Caco-2 (cell line): ENCODE measurements at regions of chr5 and their contacts with region 1.

Region 1: GRCh38 chr5:127564002-127564769 is 46.7 kb downstream of the PRRC1 start:
- DNase-seq: peak; percentile 53 to 71
- H3K4me3 ChIP-seq: no peak overlapping the region
- H3K4me3 Mint-ChIP-seq: no peak overlapping the region
- H3K27ac Mint-ChIP-seq: no peak overlapping the region
- H3K4me1 ChIP-seq: no peaks in the 10 kb centered on the region
- H3K4me1 Mint-ChIP-seq: no peaks in the 10 kb centered on the region
- H3K27me3 ChIP-seq: no peaks in the 10 kb centered on the region
- H3K27me3 Mint-ChIP-seq: no peaks in the 10 kb centered on the region
- CTCF ChIP-seq: peak; percentile 60 to 80

Region 2: DNA sequence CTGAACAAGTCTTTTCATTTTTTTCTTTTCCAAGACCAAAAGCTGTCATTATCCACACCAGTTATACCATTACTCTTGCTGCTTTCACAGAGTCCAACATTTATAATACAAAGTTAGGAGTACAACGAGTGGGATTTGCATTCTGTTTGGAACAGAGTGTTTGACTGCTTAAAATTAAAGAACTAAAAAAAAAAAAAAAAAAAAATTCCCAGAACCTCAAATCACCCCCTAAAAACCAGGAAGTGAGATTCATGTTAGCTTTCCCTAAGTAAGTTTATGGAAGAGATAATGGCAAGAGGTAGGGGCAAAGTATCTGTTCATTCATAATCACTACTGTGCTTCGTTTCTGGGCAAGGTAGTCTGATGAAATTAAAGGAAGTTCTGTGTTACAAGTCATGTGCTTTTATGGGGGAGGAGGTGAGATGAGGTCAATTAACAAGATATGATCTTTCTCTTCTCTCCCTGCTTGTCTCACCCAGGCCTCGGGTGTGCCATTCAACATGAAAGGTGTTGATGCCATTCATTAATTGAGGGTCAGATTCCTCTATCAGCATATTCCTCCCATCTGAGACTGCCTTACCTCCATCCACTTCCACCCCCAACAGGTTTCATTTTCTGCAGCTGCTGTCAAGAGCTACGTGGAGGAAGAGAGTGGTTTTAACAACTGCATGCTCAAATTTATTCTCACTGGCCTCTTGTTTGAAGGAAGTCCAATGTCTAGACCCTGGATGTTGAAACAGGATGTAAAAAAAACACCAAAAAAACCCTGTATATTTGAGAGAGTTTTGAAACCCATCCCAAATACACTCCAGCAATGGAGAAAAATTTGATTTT is 591.9 kb before region 1 on chr5:
- CTCF ChIA-PET with region 1: no interaction called
- POLR2A ChIA-PET with region 1: no interaction called
- intact Hi-C with region 1: no loop called
- DNase-seq: no peak
- H3K4me3 ChIP-seq: no peak overlapping the region
- H3K4me3 Mint-ChIP-seq: no peak overlapping the region
- H3K27ac Mint-ChIP-seq: no peak overlapping the region
- H3K4me1 ChIP-seq: no peaks in the 10 kb centered on the region
- H3K4me1 Mint-ChIP-seq: no peaks in the 10 kb centered on the region
- H3K27me3 ChIP-seq: no peaks in the 10 kb centered on the region
- H3K27me3 Mint-ChIP-seq: peaks cover 12% of the 10 kb centered on the region
- CTCF ChIP-seq: no peak

Region 3: DNA sequence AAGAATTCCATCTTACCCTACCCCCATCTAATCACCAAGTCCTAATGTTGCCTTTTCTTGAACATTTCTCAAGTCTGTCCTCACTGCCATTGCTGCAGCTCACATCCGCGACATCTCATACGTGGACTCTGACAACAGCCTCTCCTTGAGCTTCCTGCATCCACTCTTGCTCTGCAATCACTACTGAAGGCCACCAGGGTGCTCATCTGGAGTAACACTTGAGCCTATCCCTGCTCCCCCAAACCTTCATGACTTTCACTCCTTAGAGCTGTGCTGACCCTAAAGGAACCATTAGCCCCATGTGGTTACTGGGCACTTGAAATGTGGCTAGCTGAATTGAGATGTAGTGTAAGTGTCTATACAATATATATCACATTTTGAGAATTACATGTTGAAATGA is 38.3 kb after region 1 on chr5:
- CTCF ChIA-PET with region 1: no interaction called
- POLR2A ChIA-PET with region 1: no interaction called
- intact Hi-C with region 1: no loop called
- DNase-seq: no peak
- H3K4me3 ChIP-seq: no peak overlapping the region
- H3K4me3 Mint-ChIP-seq: no peak overlapping the region
- H3K27ac Mint-ChIP-seq: no peak overlapping the region
- H3K4me1 ChIP-seq: no peaks in the 10 kb centered on the region
- H3K4me1 Mint-ChIP-seq: no peaks in the 10 kb centered on the region
- H3K27me3 ChIP-seq: no peaks in the 10 kb centered on the region
- H3K27me3 Mint-ChIP-seq: no peaks in the 10 kb centered on the region
- CTCF ChIP-seq: no peak

Region 4: GRCh38 chr5:128201065-128201926 is 637.1 kb after region 1 on chr5:
- CTCF ChIA-PET with region 1: interaction called, 7 read pairs
- POLR2A ChIA-PET with region 1: no interaction called
- intact Hi-C with region 1: loop called (anchors 1 kb)
- DNase-seq: peak; percentile 75 to 87
- H3K4me3 ChIP-seq: no peak overlapping the region
- H3K4me3 Mint-ChIP-seq: peak overlapping the region; percentile 57
- H3K27ac Mint-ChIP-seq: no peak overlapping the region
- H3K4me1 ChIP-seq: peaks cover 21% of the 10 kb centered on the region
- H3K4me1 Mint-ChIP-seq: peaks cover 25% of the 10 kb centered on the region
- H3K27me3 ChIP-seq: no peaks in the 10 kb centered on the region
- H3K27me3 Mint-ChIP-seq: no peaks in the 10 kb centered on the region
- CTCF ChIP-seq: peak; percentile 77 to 83

Region 5: GRCh38 chr5:128498844-128499455 is 934.8 kb after region 1 on chr5:
- CTCF ChIA-PET with region 1: interaction called, 3 read pairs
- POLR2A ChIA-PET with region 1: no interaction called
- intact Hi-C with region 1: loop called (anchors 5 kb)
- DNase-seq: peak in 1 of 2 experiments; percentile 35
- H3K4me3 ChIP-seq: no peak overlapping the region
- H3K4me3 Mint-ChIP-seq: no peak overlapping the region
- H3K27ac Mint-ChIP-seq: no peak overlapping the region
- H3K4me1 ChIP-seq: no peaks in the 10 kb centered on the region
- H3K4me1 Mint-ChIP-seq: no peaks in the 10 kb centered on the region
- H3K27me3 ChIP-seq: no peaks in the 10 kb centered on the region
- H3K27me3 Mint-ChIP-seq: no peaks in the 10 kb centered on the region
- CTCF ChIP-seq: peak; percentile 51 to 64